SK-MEL-5 (cell line): ENCODE measurements at regions of chr17 and their contacts with region 1.

Region 1: DNA sequence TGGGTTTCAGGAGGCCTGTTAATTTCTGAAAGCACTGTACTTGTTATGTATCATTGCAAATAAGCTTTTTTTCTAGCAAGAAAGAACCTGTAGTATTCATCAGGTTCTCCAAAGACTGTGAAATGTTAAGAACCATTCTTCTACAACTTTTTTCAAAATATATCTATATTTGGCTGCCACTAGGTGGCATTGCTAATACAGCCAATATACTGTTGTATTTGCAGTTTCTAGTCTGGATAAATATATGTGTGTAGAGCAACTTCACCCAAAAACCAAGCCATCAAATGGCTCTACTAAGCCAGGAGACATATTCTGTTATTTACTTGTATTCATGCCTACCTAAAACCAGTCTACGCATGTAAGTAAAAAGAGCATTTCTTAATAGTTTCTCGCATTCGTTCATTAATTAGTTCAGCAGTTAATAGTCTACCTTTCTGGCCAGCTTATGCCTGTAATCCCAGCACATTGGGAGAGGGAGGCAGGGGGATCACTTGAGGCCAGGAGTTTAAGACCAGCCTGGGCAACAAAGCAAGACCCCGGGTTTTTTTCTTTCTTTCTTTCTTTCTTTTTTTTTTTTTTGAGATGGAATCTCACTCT is 39.5 kb downstream of the VMP1 start:
- DNase-seq: peak; percentile 84

Region 2: DNA sequence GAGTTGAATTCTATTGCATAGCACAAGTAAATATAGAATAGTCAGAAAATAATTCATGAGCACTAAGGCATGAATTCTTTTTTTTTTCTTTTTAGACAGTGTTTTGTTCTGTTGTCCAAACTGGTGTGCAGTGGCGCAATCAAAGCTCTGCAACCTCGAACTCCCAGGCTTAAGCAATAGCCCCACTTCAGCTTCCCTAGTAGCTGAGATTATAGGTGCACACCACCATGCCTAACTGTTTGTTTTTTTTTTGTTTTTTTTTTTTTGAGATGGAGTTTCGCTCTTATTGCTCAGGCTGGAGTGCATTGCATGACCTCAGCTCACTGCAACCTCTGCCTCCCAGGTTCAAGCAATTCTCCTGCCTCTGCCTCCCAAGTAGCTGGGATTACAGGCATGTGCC is 129.2 kb after region 1 on chr17:
- in situ Hi-C with region 1: loop called (anchors 10 kb)
- DNase-seq: no peak

Region 3: DNA sequence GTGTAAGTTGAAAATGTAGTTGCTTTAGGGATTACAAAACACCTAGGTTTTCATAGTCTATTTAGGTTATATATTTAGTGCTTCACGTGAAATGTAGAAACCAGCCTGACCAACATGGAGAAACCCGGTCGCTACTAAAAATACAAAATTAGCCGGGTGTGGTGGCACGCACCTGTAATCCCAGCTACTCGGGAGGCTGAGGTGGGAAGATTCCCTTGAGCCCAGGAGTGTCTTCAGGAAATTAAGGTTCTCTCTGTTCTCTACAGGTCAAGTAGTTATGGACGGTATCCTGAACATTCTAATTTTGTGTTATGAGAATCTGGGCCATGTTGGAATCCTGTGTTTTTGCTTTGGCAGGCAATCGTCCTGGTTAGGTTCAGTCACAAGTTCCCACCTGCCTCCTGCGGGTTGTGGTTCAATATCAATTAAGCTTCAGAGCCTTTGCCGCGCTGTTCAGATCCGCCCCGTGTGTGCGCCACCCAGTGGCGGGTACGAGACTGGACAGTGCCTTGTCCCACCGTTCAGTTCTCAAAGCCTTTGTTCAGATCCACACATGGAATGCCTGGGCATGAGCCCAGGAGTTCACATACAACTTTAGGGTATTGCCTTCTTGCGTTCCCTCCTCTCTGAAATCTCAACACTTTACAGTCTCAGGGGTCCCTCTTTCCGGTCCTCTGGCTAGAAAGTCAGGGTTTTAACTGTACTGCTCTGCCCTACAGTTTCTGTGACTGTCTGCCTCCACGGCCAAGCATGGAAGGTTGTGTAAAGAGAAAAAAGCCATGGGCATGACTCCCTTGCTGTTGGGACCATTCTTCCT is 290.1 kb after region 1 on chr17:
- in situ Hi-C with region 1: loop called (anchors 25 kb)
- DNase-seq: peak; percentile 91